Activated T-helper 1 cell treated with anti-CD3 and anti-CD28 coated beads, Interleukin-12 subunit alpha, Interleukin-12 subunit beta, Interleukin-2, Interleukin-4 antibody, amounts not matched to agents 30 ng/mL and 10 ng/mL and 1 ng/mL, durations not matched to agents 14 hours and 24 hours and 36 hours (primary cell): ENCODE measurements at regions of chr19 and their contacts with region 1.

Region 1: DNA sequence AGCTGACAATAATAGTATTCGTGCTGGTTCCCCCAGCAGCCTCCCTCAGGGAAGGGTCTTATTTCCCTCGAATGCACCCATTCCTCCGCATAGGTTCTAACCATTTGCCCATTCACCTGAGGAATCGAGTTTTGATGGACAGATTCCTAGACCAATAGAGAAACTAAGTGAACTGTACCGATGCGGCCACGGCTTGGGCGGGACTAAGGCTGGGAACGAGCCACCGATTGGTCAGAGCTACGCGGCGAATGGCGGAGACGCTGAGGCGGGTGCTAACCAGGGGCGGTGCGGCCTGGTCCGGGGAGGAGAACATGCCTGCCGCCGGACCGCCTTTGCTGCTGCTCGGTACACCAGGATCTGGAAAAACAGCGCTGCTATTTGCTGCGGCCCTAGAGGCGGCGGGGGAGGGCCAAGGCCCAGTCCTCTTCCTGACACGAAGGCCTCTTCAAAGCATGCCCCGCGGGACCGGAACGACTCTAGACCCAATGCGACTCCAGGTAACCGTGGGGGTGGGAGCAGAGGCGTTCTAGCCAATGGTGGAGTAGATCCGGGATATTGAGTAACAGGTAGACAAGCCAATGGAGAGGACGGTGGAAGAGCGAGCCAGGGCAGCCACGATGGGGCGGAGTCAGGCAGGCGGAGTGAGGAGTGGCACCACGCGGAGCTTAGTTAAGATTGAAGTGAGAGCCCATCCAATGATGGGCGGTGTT is at the start of gene SWSAP1:
- DNase-seq: peak; percentile 97
- H3K4me3 Mint-ChIP-seq: no peak within 1 kb of the TSS
- H3K27ac Mint-ChIP-seq: no peak within 1 kb of the TSS
- H3K4me1 Mint-ChIP-seq: peaks cover 31% of the 10 kb centered on the region
- H3K27me3 Mint-ChIP-seq: no peaks in the 10 kb centered on the region
- total RNA-seq, gene SWSAP1: 3.2 and 3.9 TPM in 2 replicates

Region 2: DNA sequence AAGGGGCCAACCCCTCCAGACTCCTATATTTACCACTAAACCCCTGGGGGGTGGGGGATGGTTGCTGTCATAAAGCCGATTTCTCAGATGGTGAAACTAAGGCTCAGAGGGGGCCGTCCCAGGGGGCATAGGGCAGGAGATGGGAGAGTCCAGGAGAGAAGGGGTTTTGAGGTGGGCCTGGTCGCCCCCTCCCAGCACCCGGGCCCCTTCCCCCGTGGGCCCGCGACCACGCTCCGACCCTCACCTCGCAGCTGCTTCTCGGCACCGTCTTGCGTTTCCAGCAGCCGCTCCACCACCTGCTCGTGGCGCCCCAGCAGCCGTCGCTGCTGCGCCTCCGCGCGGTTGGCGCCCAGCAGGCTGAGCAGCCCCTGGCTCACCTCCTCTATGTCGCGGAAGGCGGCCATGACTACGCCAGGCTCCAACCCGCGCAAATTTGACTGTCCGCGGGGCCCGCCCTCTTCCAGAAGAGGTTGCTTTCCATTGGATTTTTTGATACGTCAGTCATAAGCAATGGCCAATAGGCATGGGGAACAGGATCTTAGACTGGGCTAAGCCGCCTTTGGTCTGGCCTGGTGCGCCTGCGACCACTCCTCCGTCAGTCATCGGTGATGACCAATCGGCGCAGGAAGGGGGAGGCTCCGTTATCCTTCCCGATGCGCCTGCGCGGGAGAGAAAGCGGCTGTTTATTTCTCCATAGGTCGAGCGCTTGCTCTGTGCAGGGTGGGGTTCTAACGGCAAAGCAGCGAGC is 219.0 kb before region 1 on chr19 and contains the start of gene SPC24:
- intact Hi-C with region 1: loop called (anchors 2 kb)
- DNase-seq: peak; percentile 94
- H3K4me3 Mint-ChIP-seq: peak within 1 kb of the TSS; percentile 84
- H3K27ac Mint-ChIP-seq: peak within 1 kb of the TSS; percentile 89
- H3K4me1 Mint-ChIP-seq: peaks cover 7% of the 10 kb centered on the region
- H3K27me3 Mint-ChIP-seq: no peaks in the 10 kb centered on the region
- total RNA-seq, gene SPC24: 30.3 and 30.4 TPM in 2 replicates

Region 3: GRCh38 chr19:11346092-11346940 is 28.3 kb before region 1 on chr19 and contains the starts of genes CCDC159 and TMEM205:
- intact Hi-C with region 1: loop called (anchors 1 kb)
- DNase-seq: peak; percentile 98
- H3K4me3 Mint-ChIP-seq: peak within 1 kb of the TSS; percentile 89
- H3K27ac Mint-ChIP-seq: peak within 1 kb of the TSS; percentile 93
- H3K4me1 Mint-ChIP-seq: peaks cover 28% of the 10 kb centered on the region
- H3K27me3 Mint-ChIP-seq: no peaks in the 10 kb centered on the region
- total RNA-seq, gene CCDC159: 10.7 and 14.4 TPM in 2 replicates
- total RNA-seq, gene TMEM205: 26.6 and 31.2 TPM in 2 replicates

Region 4: DNA sequence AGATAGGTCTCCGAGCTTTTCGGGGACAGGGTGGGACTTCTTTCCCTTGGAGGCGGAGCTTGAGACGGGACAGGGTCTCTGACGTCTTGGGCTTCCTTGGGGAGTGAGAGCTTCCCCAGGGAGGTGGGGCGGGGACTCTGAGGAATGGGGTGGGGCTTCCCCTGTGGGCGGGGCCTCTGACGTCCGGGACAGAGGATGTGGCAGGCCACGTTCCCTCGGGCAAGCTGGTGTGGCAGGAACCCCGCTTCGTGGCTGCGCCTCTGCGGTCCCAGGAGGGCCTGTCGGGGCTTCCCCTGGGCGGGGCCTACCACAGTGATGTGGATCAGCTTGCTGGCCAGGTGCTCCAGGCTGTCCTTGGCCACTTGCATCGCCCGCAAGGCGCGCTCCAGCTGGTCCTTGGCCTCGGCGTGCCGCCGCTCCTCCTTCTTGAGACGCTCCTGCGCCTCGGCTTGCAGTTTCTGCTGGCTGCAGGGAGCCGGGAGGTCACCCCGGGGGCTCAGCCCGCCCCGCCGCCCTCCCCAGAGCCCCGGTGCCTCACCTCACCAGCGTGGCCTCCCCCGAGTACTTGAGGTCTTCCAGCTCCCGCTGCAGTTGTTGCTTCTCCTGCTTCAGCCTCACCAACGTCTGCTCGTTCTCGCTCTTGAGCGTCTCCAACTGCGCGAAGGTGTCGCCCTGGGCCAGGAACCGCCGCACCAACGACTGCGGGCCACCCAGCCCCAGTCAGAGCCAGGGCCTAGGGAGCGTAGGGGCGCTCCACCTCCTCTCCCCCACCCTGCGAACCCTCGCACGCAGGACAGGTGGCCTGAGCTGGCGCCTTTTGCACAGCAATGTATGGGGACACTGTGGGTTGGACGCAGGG is 47.8 kb after region 1 on chr19:
- intact Hi-C with region 1: no loop called
- DNase-seq: peak; percentile 67
- H3K4me3 Mint-ChIP-seq: peak overlapping the region; percentile 72
- H3K27ac Mint-ChIP-seq: no peak overlapping the region
- H3K4me1 Mint-ChIP-seq: peaks cover 31% of the 10 kb centered on the region
- H3K27me3 Mint-ChIP-seq: peaks cover 64% of the 10 kb centered on the region

Region 5: GRCh38 chr19:11505032-11505503 is 130.5 kb after region 1 on chr19:
- intact Hi-C with region 1: loop called (anchors 1 kb)
- DNase-seq: peak; percentile 97
- H3K4me3 Mint-ChIP-seq: peak overlapping the region; percentile 91
- H3K27ac Mint-ChIP-seq: peak overlapping the region; percentile 84
- H3K4me1 Mint-ChIP-seq: peaks cover 13% of the 10 kb centered on the region
- H3K27me3 Mint-ChIP-seq: no peaks in the 10 kb centered on the region

Region 6: DNA sequence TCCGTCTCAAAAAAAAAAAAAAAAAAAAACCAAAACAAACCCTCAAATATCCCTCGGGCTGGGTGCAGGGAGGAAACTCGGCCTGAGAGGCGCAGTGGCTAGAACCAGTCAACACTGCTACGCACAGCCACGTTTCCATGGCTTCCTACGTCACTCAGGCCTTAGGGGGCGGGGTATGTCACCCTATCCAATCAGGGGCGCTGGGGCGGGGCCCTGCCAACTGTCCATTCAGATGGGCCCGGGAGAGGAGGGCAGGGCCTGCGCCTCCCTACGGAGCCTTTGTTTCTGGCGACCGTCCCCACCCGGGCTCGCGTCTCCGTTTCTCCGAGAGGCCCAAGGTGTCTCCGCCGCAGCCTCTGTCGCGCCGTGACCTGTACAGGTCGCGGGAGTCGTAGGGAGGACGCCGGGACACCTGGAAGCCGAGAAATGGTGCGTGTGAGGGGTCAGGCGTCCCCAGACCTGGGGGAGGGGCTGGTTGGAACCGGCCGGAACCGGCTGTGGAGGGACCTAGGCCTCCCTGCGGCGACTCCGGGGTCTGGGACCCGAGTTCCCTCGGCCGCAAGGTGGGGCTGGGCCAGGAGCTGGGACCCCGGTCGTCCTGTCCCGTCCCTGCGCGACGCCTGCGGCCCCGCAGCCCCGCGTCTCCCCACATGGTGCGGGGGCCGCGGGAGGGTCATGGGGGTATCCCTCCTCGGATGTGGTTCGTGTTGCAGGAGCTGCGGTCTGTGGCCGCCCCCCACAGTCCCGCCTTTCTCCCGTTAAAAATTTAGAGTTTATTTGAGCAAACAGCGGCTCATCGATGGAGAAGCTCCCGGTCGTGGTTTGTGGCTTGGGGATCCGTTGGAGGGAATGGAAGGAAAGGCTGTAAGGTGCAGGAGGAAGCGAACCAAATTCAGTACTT is 222.9 kb after region 1 on chr19 and contains the start of gene ZNF627:
- intact Hi-C with region 1: loop called (anchors 1 kb)
- DNase-seq: peak; percentile 96
- H3K4me3 Mint-ChIP-seq: peak within 1 kb of the TSS; percentile 93
- H3K27ac Mint-ChIP-seq: peak within 1 kb of the TSS; percentile 89
- H3K4me1 Mint-ChIP-seq: peaks cover 10% of the 10 kb centered on the region
- H3K27me3 Mint-ChIP-seq: no peaks in the 10 kb centered on the region
- total RNA-seq, gene ZNF627: 4.3 and 5.2 TPM in 2 replicates